Activated T-helper 2 cell treated with anti-CD3 and anti-CD28 coated beads, Interferon-gamma antibody, Interleukin-2, Interleukin-4, amounts not matched to agents 10 μg/mL and 5 μg/mL and 100 μg/mL, durations not matched to agents 14 hours and 24 hours and 36 hours (primary cell): ENCODE measurements at regions of chr9 and their contacts with region 1.

Region 1: GRCh38 chr9:137240861-137241489 is at the start of gene TUBB4B:
- DNase-seq: peak; percentile 98
- H3K4me3 Mint-ChIP-seq: peak within 1 kb of the TSS; percentile 89
- H3K27ac Mint-ChIP-seq: peak within 1 kb of the TSS; percentile 92
- H3K4me1 Mint-ChIP-seq: peaks cover 14% of the 10 kb centered on the region
- H3K27me3 Mint-ChIP-seq: no peaks in the 10 kb centered on the region
- total RNA-seq, gene TUBB4B: 357 and 361 TPM in 2 replicates

Region 2: GRCh38 chr9:137046098-137046787 is 194.7 kb before region 1 on chr9 and contains the start of gene NPDC1:
- intact Hi-C with region 1: loop called (anchors 5 kb)
- DNase-seq: peak; percentile 76
- H3K4me3 Mint-ChIP-seq: peak within 1 kb of the TSS; percentile 60
- H3K27ac Mint-ChIP-seq: no peak within 1 kb of the TSS
- H3K4me1 Mint-ChIP-seq: peaks cover 4% of the 10 kb centered on the region
- H3K27me3 Mint-ChIP-seq: peaks cover 29% of the 10 kb centered on the region
- total RNA-seq, gene NPDC1: 32.7 and 36.0 TPM in 2 replicates

Region 3: DNA sequence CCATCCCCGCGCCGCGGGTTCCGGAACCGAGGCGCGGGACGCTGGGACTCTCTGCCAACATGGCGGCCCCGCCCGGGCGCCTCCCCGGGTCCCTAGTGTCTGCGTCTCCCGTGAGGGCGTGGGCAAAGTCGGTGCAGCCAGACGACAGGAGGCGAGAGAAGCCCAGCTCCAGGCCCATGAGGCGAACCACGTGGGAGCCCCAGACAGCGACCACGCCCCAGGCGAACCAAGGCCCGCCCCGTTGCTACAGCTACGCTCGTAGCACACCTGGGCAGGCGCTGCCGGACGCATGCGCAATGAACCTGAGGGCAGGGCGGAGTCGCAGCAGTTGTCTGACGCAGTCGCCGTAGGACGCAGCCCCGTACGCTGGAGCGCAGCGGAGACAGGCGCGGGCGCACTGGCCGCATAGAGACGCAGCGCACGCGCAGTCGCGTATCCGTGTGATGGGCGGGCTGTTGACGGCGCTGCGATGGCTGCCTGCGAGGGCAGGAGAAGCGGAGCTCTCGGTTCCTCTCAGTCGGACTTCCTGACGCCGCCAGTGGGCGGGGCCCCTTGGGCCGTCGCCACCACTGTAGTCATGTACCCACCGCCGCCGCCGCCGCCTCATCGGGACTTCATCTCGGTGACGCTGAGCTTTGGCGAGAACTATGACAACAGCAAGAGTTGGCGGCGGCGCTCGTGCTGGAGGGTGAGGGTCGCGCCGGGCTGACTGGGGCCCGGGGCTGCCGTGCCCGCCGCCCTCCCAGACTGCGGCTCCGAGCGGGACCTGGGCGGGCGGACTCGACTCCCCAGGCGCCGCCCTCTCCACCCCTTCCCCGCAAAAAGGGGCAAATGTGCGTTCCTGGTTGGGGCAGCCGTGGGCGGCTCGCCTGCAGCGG is 154.2 kb before region 1 on chr9 and contains the start of gene MAN1B1:
- intact Hi-C with region 1: loop called (anchors 5 kb)
- DNase-seq: peak; percentile 100
- H3K4me3 Mint-ChIP-seq: peak within 1 kb of the TSS; percentile 92
- H3K27ac Mint-ChIP-seq: peak within 1 kb of the TSS; percentile 88
- H3K4me1 Mint-ChIP-seq: peaks cover 34% of the 10 kb centered on the region
- H3K27me3 Mint-ChIP-seq: no peaks in the 10 kb centered on the region
- total RNA-seq, gene MAN1B1: 47.5 and 52.2 TPM in 2 replicates

Region 4: GRCh38 chr9:137129456-137130175 is 111.4 kb before region 1 on chr9:
- intact Hi-C with region 1: loop called (anchors 5 kb)
- DNase-seq: peak; percentile 90
- H3K4me3 Mint-ChIP-seq: peak overlapping the region; percentile 88
- H3K27ac Mint-ChIP-seq: peak overlapping the region; percentile 38
- H3K4me1 Mint-ChIP-seq: peaks cover 24% of the 10 kb centered on the region
- H3K27me3 Mint-ChIP-seq: peaks cover 3% of the 10 kb centered on the region

Region 5: GRCh38 chr9:137188490-137189296 is 52.3 kb before region 1 on chr9 and contains the starts of genes ANAPC2 and SSNA1:
- intact Hi-C with region 1: loop called (anchors 5 kb)
- DNase-seq: peak; percentile 93
- H3K4me3 Mint-ChIP-seq: peak within 1 kb of the TSS; percentile 94
- H3K27ac Mint-ChIP-seq: peak within 1 kb of the TSS; percentile 89
- H3K4me1 Mint-ChIP-seq: peaks cover 25% of the 10 kb centered on the region
- H3K27me3 Mint-ChIP-seq: no peaks in the 10 kb centered on the region
- total RNA-seq, gene ANAPC2: 52.3 and 58.5 TPM in 2 replicates
- total RNA-seq, gene SSNA1: 91.6 and 91.8 TPM in 2 replicates

Region 6: GRCh38 chr9:137223078-137223970 is 17.7 kb before region 1 on chr9:
- intact Hi-C with region 1: loop called (anchors 1 kb)
- DNase-seq: peak; percentile 99
- H3K4me3 Mint-ChIP-seq: peak overlapping the region; percentile 82
- H3K27ac Mint-ChIP-seq: peak overlapping the region; percentile 73
- H3K4me1 Mint-ChIP-seq: peaks cover 7% of the 10 kb centered on the region
- H3K27me3 Mint-ChIP-seq: no peaks in the 10 kb centered on the region

Region 7: DNA sequence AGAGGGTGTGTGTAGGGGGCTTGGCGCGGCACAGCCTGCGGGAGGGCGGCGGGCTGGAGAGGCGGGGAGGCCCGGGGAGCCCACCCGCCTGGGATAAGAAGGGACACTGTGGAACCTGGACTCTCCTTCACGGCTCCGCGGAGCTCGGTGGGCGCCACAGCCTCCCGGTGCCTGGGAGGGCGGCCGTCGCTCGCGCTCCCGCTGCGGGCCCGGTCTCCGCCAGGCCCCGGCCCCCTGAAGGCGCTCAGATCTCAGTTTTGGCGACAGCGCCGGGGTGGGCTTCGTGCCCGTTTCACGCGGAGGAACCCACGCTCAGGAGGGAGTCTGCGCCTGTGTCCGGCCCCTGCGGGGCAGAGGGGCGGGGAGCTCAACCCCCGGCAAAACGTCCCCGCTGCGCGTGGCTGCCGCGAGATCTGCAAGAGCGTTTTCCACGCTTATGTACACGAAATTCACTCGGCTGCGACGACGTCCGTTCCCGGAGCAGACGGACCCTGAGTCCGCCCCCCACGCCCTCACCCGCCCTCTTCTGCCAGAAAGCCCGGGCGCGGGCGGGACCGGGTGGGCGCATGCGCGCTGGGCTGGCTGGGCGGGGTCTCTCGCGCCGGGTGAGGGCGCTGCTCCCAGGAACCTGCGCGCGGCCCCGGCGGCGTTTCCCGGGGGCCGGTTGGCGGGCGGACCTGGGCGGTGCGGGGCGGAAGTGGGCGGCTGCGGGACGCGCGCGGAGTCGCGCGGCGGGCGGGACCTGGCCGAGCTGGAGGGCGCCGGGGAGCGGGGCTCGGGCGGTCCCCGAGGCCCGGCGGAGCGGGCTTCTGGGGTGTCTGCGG is 13.9 kb after region 1 on chr9 and contains the start of gene NELFB:
- intact Hi-C with region 1: loop called (anchors 1 kb)
- DNase-seq: peak; percentile 95
- H3K4me3 Mint-ChIP-seq: peak within 1 kb of the TSS; percentile 85
- H3K27ac Mint-ChIP-seq: peak within 1 kb of the TSS; percentile 73
- H3K4me1 Mint-ChIP-seq: peaks cover 13% of the 10 kb centered on the region
- H3K27me3 Mint-ChIP-seq: no peaks in the 10 kb centered on the region
- total RNA-seq, gene NELFB: 71.4 and 72.6 TPM in 2 replicates